Spleen (tissue), 13 donors: ENCODE measurements at regions of chr12 and their contacts with region 1.

Region 1: GRCh38 chr12:131642101-131642540 is 68.8 kb upstream of the SFSWAP start:
- DNase-seq: no peak
- H3K4me3 ChIP-seq: no peak overlapping the region
- H3K27ac ChIP-seq: no peak overlapping the region
- H3K4me1 ChIP-seq: no peaks in the 10 kb centered on the region
- H3K27me3 ChIP-seq: peaks cover 0 to 70% (median 7%) of the 10 kb centered on the region in 7 donors
- CTCF ChIP-seq: no peak
- POLR2A ChIP-seq: no peak

Region 2: DNA sequence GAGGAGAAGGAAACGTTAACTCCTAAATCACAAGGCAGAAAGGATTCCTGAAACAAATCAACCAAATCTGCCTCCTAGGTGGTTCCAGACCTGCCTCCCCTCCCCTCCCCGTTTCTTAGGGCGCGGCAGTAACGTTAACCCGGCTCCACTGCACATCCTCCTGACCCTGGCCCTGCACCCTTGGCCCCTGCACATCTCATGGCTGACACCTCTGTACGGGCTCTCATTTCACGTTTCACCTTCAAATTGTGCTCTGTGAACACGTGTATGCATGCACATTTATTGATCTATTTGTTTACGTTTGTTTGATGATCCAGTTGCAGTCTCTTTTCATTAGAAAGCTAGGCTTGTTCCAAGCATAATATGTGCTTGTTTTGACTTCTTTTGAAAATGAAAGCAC is 330.4 kb before region 1 on chr12:
- intact Hi-C with region 1: loop called (anchors 5 kb)
- DNase-seq: peak; percentile 56
- H3K4me3 ChIP-seq: no peak overlapping the region
- H3K27ac ChIP-seq: no peak overlapping the region
- H3K4me1 ChIP-seq: peaks cover 0 to 5% (median 0%) of the 10 kb centered on the region in 6 donors
- H3K27me3 ChIP-seq: peaks cover 0 to 39% (median 4%) of the 10 kb centered on the region in 7 donors
- CTCF ChIP-seq: no peak
- POLR2A ChIP-seq: no peak

Region 3: GRCh38 chr12:131511391-131511802 is 130.7 kb before region 1 on chr12:
- intact Hi-C with region 1: no loop called
- DNase-seq: no peak
- H3K4me3 ChIP-seq: peak overlapping the region in 1 of 8 donors; percentile 30
- H3K27ac ChIP-seq: peak overlapping the region in 4 of 8 donors; percentile 23 to 77 (median 53)
- H3K4me1 ChIP-seq: peaks cover 9 to 20% (median 16%) of the 10 kb centered on the region in 6 donors
- H3K27me3 ChIP-seq: no peaks in the 10 kb centered on the region
- CTCF ChIP-seq: no peak
- POLR2A ChIP-seq: no peak

Region 4: DNA sequence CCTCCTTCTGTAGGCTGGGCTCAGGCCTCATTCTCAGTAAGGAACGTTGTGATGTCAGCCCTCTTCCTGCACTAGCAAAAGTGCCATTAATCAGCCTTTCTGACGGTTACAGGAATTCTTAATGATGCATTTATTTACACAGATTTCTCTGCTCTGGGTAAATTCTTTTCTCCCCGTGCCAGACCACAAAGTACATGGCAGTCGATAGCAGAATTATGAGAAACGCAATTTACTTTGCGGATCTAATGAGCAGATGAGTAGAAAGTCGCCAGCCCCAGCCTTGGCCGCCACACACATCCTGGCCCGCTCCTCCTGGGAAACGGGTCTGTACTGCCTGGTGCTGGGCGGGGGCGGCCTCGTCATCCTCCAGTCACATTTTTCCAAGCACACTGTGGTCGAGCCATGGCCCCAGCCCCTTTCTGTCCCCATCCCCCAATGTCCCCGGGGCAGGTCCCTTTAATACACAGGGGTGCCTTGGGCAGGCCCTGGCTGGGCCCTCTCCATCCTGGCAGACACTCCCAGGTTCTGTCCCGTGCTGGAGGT is 528.0 kb after region 1 on chr12:
- intact Hi-C with region 1: no loop called
- DNase-seq: peak; percentile 59
- H3K4me3 ChIP-seq: no peak overlapping the region
- H3K27ac ChIP-seq: no peak overlapping the region
- H3K4me1 ChIP-seq: no peaks in the 10 kb centered on the region
- H3K27me3 ChIP-seq: peaks cover 0 to 69% (median 37%) of the 10 kb centered on the region in 7 donors
- CTCF ChIP-seq: no peak
- POLR2A ChIP-seq: no peak